Head of caudate nucleus (tissue), 42 donors: ENCODE measurements at regions of chr2 and their contacts with region 1.

Region 1: GRCh38 chr2:11778923-11779757 is 32.7 kb downstream of the LPIN1 start:
- DNase-seq: peak; percentile 72 to 96 (median 88)

Region 2: DNA sequence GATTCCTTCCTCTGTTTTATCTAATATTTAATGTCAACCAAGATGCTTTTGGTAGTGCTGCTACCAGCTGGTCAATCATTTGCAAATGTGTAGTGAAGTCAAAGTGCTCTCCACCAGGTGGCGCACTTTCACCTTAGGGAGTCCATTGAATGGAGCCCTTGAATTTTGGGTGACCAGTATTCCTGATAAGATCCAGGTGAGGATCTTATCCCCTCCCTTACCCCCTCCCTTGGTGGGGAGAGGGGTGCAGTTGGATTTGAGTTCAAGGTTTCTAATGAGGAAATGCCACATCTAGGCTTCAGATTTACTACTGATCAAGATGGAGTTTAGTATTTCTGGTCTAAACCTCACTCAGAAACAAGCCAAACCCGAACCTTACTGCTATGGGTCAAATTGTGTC is 301.1 kb before region 1 on chr2:
- intact Hi-C with region 1: loop called (anchors 10 kb)
- DNase-seq: peak; percentile 79 to 99 (median 95)

Region 3: DNA sequence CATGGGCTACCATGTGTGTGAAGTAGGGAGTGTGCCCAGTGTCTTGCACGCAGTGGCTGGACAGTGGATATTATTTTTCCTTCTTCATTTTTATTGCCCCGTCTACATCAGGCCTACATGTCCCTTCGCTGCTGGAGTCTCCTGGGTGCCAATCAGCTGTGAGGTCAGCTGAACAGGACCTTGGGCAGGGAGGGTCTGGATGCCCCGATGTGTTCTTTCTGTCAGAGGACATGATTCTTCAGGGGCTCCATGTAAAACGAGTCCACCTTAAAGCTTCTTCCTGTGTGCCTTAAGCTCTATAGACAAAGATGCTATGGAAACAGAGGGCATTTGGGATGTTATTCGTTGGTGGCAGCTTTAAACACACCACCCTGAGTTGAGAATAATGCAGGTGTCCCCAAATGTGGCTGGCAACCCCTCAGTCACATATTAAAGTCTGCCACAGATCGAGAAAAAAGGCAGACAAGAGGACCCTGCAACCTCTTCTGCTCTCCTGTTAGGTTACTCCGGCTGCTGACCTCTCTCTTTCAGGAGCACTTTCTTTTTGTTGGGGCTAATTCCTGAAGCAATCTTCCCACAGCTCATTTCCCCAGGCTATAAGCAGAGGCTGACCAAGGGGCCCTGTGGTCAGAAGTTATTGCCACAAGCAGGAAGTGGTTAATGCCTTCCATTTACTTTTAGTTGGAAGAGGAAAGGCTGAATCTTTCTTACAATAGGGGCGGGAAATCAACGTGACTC is 225.3 kb before region 1 on chr2:
- intact Hi-C with region 1: no loop called
- DNase-seq: peak in 3 of 42 donors; percentile 1 to 8 (median 7)

Region 4: GRCh38 chr2:11688222-11689069 is 90.7 kb before region 1 on chr2:
- intact Hi-C with region 1: loop called (anchors 2 kb)
- DNase-seq: peak; percentile 53 to 92 (median 79)

Region 5: DNA sequence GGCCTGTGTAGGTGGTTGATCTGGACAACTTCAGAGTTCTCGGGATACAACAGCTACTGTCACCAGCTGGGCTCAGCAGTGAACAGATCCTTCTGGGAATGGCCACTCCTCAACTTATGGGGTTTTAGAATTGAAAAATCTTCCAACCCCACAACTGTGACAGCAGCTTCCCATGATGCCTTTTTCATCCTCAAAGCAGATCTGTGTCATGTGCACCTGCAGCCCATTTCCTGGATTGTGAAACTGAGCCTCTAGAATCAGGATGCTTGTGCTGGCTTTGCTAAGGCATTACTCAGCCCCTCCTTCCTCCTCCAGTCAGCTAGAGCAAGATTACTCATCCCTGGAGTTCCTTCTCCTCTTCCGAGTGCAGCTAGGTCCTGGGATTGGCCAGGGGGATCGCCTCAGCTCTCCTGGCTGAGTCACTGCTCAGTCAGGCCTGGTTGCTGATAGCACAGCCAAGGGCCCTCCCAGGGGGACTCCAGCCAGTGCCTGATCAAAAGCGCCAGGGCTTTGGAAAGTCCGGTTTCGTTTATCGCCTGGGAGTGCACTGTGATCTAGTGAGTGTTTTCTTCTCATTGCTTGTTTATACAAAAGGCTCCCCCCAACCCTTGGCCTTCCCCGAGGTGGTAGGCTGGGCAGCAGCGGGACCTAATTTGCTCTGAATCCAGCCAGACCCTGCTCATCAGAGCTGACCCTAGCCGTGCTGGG is 35.1 kb before region 1 on chr2:
- intact Hi-C with region 1: loop called (anchors 5 kb)
- DNase-seq: peak; percentile 75 to 97 (median 87)

Region 6: GRCh38 chr2:11977766-11978524 is 198.8 kb after region 1 on chr2:
- intact Hi-C with region 1: no loop called
- DNase-seq: no peak